PC-9 (cell line): ENCODE measurements at regions of chr6 and their contacts with region 1.

Region 1: DNA sequence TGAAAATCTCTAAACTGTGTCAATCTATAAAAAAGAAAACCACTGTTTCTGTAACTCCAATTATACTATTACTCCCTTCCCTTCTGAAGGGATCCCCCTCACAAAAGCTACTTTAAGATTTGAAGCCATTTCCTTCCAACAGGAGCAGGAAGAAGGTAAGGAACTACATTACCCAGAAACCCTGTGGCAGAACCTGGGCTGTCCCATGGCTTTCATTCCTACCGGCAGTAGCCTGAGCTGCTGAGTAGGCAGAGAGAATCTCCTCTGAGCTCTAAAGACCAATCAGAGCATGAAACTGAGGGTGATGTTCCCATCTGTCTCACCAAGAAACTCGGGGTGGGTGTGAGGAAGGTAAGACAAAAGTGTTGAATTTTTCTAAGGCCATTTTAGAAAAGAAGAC is 107.9 kb upstream of the LRFN2 start:
- DNase-seq: no peak
- H3K4me3 ChIP-seq: no peak overlapping the region
- H3K27ac ChIP-seq: no peak overlapping the region
- H3K4me1 ChIP-seq: no peaks in the 10 kb centered on the region
- H3K27me3 ChIP-seq: peaks cover 22% of the 10 kb centered on the region
- CTCF ChIP-seq: no peak

Region 2: DNA sequence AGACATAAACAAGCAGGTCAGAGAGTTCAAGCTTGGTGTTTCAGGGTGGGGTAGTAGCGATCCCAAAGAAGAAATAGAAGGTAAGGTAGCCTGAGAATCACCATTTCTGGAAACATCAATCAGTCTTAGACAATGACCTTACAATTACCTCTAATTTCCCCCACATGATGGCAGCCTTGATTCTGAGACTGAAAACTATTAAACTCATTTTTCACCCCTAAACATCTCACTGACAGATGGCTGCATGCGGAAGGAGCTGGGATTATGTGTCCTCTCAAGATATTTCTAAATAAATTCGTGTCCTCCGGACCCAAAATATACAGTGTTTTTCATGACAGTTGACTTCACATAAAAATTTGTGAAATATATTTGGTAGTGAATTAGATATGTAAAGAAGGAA is 1030.9 kb before region 1 on chr6:
- CTCF ChIA-PET with region 1: no interaction called
- POLR2A ChIA-PET with region 1: no interaction called
- intact Hi-C with region 1: no loop called
- DNase-seq: no peak
- H3K4me3 ChIP-seq: no peak overlapping the region
- H3K27ac ChIP-seq: no peak overlapping the region
- H3K4me1 ChIP-seq: no peaks in the 10 kb centered on the region
- H3K27me3 ChIP-seq: no peaks in the 10 kb centered on the region
- CTCF ChIP-seq: no peak

Region 3: GRCh38 chr6:40672097-40672496 is 23.0 kb before region 1 on chr6:
- CTCF ChIA-PET with region 1: no interaction called
- POLR2A ChIA-PET with region 1: no interaction called
- intact Hi-C with region 1: no loop called
- DNase-seq: no peak
- H3K4me3 ChIP-seq: no peak overlapping the region
- H3K27ac ChIP-seq: no peak overlapping the region
- H3K4me1 ChIP-seq: no peaks in the 10 kb centered on the region
- H3K27me3 ChIP-seq: peaks cover 53% of the 10 kb centered on the region
- CTCF ChIP-seq: no peak

Region 4: DNA sequence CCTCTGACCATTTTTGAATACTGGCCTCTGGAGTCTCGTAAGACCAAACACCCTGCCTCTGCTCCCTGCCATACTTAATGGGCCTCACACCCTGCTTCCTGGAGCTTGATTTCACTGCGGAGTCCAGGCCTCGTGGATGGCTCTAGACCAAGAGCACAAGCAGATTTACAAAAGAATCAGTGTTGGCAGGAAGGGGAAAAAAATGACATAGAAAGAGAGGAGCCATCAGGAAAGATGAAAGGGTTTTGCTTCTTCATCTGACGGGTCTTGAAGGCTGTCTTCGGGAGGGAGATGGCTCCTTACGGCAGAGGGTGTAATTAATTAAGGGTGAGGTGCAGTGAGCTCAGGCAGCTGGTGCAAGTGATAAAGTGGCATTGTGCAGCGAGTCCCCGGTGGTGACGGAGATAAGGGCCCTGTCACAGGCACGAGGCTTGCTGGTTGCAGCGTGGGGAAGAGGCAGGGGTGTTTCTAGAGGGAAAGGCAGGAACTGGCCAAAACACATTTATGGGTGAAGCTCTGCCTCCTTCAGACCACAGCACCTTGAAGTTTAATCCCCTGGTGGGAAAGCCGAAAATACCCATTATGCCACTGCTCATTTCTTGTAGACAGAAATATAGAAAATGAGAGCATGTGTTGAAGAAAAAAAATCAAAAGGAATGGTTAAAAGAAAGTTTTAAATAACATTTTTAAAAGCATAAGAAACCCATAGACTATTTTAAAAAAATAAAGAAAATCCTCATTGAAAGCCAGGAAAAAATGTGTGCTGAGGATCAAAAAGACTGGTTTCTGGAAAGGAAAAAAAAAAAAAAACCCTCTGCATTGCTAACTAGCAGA is 20.7 kb after region 1 on chr6:
- CTCF ChIA-PET with region 1: no interaction called
- POLR2A ChIA-PET with region 1: interaction called, 11 read pairs
- intact Hi-C with region 1: no loop called
- DNase-seq: no peak
- H3K4me3 ChIP-seq: no peak overlapping the region
- H3K27ac ChIP-seq: no peak overlapping the region
- H3K4me1 ChIP-seq: no peaks in the 10 kb centered on the region
- H3K27me3 ChIP-seq: peaks cover 51% of the 10 kb centered on the region
- CTCF ChIP-seq: no peak